ENCODE measurements at regions of chr1 and their contacts with region 1.

Region 1: DNA sequence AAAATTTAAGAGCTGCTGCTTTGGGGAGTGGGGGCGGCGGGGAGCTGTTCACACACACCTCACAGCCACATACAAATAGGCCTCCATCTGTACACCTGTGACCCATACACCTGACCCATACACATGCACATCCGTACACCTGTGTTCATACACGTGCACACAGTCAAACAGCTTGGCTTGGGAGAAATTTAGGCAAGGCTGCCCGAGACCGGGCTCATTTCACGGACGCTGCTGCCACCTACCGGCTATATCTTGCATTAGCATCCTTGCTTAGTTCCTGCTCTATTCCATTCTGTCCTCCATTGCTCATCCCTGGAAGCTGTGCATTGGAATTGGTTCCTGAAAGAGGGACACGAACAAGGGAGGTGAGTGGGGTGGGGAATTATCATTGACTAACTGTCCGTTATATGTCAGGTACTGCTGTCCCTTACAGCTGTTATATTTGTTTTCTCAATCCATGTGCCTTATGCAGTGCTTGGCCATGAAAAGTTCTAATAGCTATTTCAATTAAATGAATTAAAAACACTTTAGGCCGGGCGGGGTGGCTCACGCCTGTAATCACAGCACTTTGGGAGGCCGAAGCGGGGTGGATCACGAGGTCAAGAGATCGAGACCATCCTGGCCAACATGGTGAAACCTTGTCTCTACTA is 37.1 kb upstream of the EPB41 start:
- DNase-seq: peak; percentile 71 to 89
- ATAC-seq: peak; percentile 81 to 88 (median 85)
- H3K4me3 ChIP-seq: no peak overlapping the region
- H3K4me3 Mint-ChIP-seq: no peak overlapping the region
- H3K27ac ChIP-seq: no peak overlapping the region
- H3K27ac Mint-ChIP-seq: no peak overlapping the region
- H3K4me1 ChIP-seq: peaks cover 6% of the 10 kb centered on the region
- H3K4me1 Mint-ChIP-seq: peaks cover 4 to 5% of the 10 kb centered on the region in 2 donors
- H3K27me3 ChIP-seq: no peaks in the 10 kb centered on the region
- H3K27me3 Mint-ChIP-seq: peaks cover 0 to 2% of the 10 kb centered on the region in 2 donors
- CTCF ChIP-seq: peak; percentile 89

Region 2: GRCh38 chr1:28088168-28088961 is 788.9 kb before region 1 on chr1 and contains the start of gene EYA3:
- intact Hi-C with region 1: loop called (anchors 1 kb)
- DNase-seq: peak; percentile 99 to 100
- ATAC-seq: peak; percentile 94 to 99 (median 94)
- H3K4me3 ChIP-seq: peak within 1 kb of the TSS; percentile 92
- H3K4me3 Mint-ChIP-seq: peak within 1 kb of the TSS; percentile 94
- H3K27ac ChIP-seq: peak within 1 kb of the TSS; percentile 84
- H3K27ac Mint-ChIP-seq: peak within 1 kb of the TSS; percentile 95 to 99
- H3K4me1 ChIP-seq: peaks cover 11% of the 10 kb centered on the region
- H3K4me1 Mint-ChIP-seq: peaks cover 48 to 50% of the 10 kb centered on the region in 2 donors
- H3K27me3 ChIP-seq: no peaks in the 10 kb centered on the region
- H3K27me3 Mint-ChIP-seq: no peaks in the 10 kb centered on the region
- CTCF ChIP-seq: no peak
- total RNA-seq, gene EYA3: 17.7 to 25.2 (median 19.1) TPM

Region 3: GRCh38 chr1:28359592-28360239 is 517.5 kb before region 1 on chr1:
- intact Hi-C with region 1: loop called (anchors 1 kb)
- DNase-seq: peak; percentile 65 to 84
- ATAC-seq: peak; percentile 55 to 92 (median 72)
- H3K4me3 ChIP-seq: no peak overlapping the region
- H3K4me3 Mint-ChIP-seq: no peak overlapping the region
- H3K27ac ChIP-seq: no peak overlapping the region
- H3K27ac Mint-ChIP-seq: no peak overlapping the region
- H3K4me1 ChIP-seq: peaks cover 11% of the 10 kb centered on the region
- H3K4me1 Mint-ChIP-seq: peaks cover 5 to 10% of the 10 kb centered on the region in 2 donors
- H3K27me3 ChIP-seq: no peaks in the 10 kb centered on the region
- H3K27me3 Mint-ChIP-seq: peaks cover 0 to 3% of the 10 kb centered on the region in 2 donors
- CTCF ChIP-seq: peak; percentile 84

Region 4: DNA sequence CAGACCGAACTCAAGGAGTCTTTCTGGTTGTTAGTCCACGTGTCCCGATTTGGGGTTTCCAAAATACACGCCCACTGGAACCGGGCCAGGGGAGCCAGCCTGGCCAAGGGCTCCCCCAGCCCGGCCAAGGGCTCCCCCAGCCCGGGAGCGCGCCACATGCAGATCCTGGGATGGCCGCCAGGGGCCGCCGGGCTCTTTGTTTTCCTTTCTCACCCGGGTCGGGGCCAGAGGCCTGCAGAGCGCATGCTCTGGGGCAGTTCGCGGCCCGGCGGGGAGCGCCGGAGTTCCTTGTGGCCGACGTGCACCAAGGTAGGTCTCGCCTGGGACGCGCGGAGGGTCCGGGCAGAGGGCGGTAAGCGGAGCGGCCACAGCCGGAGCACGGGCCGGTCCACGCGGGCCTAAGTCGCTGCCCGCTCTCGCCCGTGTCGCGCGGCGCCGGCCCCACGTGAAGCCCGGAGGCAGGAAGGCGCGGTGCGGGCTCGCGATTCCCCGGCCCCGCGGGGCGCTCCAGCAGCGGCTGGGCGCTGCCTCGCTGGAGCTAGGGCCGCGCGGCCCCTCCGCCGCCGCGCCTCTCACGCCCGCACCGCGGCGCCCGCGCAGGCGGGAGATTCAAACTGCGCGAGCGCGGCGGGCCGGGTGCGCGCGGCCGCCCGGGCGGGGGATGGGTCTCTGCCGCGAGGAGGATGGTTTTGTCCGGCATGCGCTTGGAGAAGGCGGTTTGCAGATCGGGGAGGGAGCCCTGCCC is 359.1 kb before region 1 on chr1:
- intact Hi-C with region 1: loop called (anchors 1 kb)
- DNase-seq: peak; percentile 88 to 91
- ATAC-seq: peak; percentile 81 to 91 (median 83)
- H3K4me3 ChIP-seq: peak overlapping the region; percentile 46
- H3K4me3 Mint-ChIP-seq: peak overlapping the region; percentile 93
- H3K27ac ChIP-seq: peak overlapping the region; percentile 34
- H3K27ac Mint-ChIP-seq: peak overlapping the region; percentile 69 to 90
- H3K4me1 ChIP-seq: peaks cover 19% of the 10 kb centered on the region
- H3K4me1 Mint-ChIP-seq: peaks cover 15 to 22% of the 10 kb centered on the region in 2 donors
- H3K27me3 ChIP-seq: no peaks in the 10 kb centered on the region
- H3K27me3 Mint-ChIP-seq: no peaks in the 10 kb centered on the region
- CTCF ChIP-seq: peak; percentile 97

Region 5: GRCh38 chr1:28779751-28780408 is 97.4 kb before region 1 on chr1:
- intact Hi-C with region 1: loop called (anchors 1 kb)
- DNase-seq: no peak
- ATAC-seq: no peak
- H3K4me3 ChIP-seq: no peak overlapping the region
- H3K4me3 Mint-ChIP-seq: no peak overlapping the region
- H3K27ac ChIP-seq: no peak overlapping the region
- H3K27ac Mint-ChIP-seq: no peak overlapping the region
- H3K4me1 ChIP-seq: peaks cover 7% of the 10 kb centered on the region
- H3K4me1 Mint-ChIP-seq: peaks cover 9 to 10% of the 10 kb centered on the region in 2 donors
- H3K27me3 ChIP-seq: no peaks in the 10 kb centered on the region
- H3K27me3 Mint-ChIP-seq: no peaks in the 10 kb centered on the region
- CTCF ChIP-seq: no peak